Ascending aorta (tissue), 2 donors: ENCODE measurements at regions of chr20 and their contacts with region 1.

Region 1: DNA sequence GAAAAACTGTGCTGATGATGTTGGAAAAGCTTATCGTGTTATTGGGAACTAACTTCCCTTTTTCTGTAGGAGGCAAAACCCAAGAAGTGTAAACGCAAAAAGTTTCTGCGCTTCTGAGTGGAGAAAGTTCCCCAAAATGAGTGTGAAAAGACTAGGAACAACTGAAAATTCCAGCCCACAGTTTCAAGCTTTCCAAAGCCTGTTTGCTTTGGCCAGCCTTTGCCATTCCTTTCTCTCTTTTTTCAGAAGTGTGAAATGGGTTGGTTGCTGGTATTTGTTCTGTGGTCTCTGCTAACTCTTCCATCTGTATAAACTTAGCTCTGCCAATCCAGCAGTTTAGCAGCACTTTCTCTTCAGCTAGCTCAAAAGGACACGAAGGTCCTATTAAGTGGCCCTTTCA is 491.3 kb downstream of the MAFB start:
- DNase-seq: no peak
- H3K4me3 ChIP-seq: peak overlapping the region in 1 of 2 donors; percentile 17
- H3K27ac ChIP-seq: peak overlapping the region; percentile 65 to 80
- H3K4me1 ChIP-seq: peaks cover 3 to 20% of the 10 kb centered on the region in 2 donors
- H3K27me3 ChIP-seq: no peaks in the 10 kb centered on the region
- CTCF ChIP-seq: no peak

Region 2: DNA sequence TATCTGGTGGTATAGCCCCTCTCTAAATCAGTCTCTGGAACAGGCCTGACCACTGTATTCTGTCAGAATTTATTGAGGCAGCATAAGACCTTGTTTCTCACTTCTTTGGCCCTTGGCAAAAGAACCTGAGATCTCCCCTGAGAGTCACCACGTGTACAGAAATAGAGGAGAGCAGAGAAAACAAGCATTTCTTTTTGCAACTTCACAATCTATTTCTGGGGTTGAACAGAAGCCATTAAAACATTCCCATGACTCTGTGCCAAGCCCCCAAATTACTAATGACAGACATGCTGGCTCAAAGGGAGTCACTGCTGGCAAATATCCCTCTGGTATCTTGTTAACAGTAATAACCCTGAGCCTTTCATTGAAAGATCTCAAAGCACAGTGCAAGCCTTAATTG is 96.0 kb after region 1 on chr20:
- intact Hi-C with region 1: loop called (anchors 2 kb)
- DNase-seq: peak in 1 of 2 donors; percentile 84
- H3K4me3 ChIP-seq: no peak overlapping the region
- H3K27ac ChIP-seq: peak overlapping the region; percentile 70 to 77
- H3K4me1 ChIP-seq: peaks cover 0 to 18% of the 10 kb centered on the region in 2 donors
- H3K27me3 ChIP-seq: no peaks in the 10 kb centered on the region
- CTCF ChIP-seq: no peak

Region 3: GRCh38 chr20:40305303-40305702 is 107.6 kb after region 1 on chr20:
- intact Hi-C with region 1: no loop called
- DNase-seq: no peak
- H3K4me3 ChIP-seq: no peak overlapping the region
- H3K27ac ChIP-seq: no peak overlapping the region
- H3K4me1 ChIP-seq: peaks cover 0 to 6% of the 10 kb centered on the region in 2 donors
- H3K27me3 ChIP-seq: no peaks in the 10 kb centered on the region
- CTCF ChIP-seq: no peak